ENCODE measurements at regions of chr11 and their contacts with region 1.

Region 1: GRCh38 chr11:1916986-1917670 is 2.4 kb upstream of the TNNT3 start:
- DNase-seq: no peak
- H3K4me3 ChIP-seq: no peak overlapping the region
- H3K27ac ChIP-seq: peak overlapping the region in 1 of 5 donors; percentile 38
- H3K4me1 ChIP-seq: peaks cover 0 to 16% (median 9%) of the 10 kb centered on the region in 4 donors
- H3K27me3 ChIP-seq: peaks cover 0 to 37% (median 10%) of the 10 kb centered on the region in 3 donors
- CTCF ChIP-seq: no peak
- EP300 ChIP-seq: no peak
- POLR2A ChIP-seq: no peak

Region 2: GRCh38 chr11:1893581-1894359 is 23.4 kb before region 1 on chr11:
- intact Hi-C with region 1: loop called (anchors 1 kb)
- DNase-seq: no peak
- H3K4me3 ChIP-seq: no peak overlapping the region
- H3K27ac ChIP-seq: no peak overlapping the region
- H3K4me1 ChIP-seq: peaks cover 0 to 24% (median 5%) of the 10 kb centered on the region in 4 donors
- H3K27me3 ChIP-seq: peaks cover 0 to 35% (median 0%) of the 10 kb centered on the region in 3 donors
- CTCF ChIP-seq: no peak
- EP300 ChIP-seq: no peak
- POLR2A ChIP-seq: no peak

Region 3: DNA sequence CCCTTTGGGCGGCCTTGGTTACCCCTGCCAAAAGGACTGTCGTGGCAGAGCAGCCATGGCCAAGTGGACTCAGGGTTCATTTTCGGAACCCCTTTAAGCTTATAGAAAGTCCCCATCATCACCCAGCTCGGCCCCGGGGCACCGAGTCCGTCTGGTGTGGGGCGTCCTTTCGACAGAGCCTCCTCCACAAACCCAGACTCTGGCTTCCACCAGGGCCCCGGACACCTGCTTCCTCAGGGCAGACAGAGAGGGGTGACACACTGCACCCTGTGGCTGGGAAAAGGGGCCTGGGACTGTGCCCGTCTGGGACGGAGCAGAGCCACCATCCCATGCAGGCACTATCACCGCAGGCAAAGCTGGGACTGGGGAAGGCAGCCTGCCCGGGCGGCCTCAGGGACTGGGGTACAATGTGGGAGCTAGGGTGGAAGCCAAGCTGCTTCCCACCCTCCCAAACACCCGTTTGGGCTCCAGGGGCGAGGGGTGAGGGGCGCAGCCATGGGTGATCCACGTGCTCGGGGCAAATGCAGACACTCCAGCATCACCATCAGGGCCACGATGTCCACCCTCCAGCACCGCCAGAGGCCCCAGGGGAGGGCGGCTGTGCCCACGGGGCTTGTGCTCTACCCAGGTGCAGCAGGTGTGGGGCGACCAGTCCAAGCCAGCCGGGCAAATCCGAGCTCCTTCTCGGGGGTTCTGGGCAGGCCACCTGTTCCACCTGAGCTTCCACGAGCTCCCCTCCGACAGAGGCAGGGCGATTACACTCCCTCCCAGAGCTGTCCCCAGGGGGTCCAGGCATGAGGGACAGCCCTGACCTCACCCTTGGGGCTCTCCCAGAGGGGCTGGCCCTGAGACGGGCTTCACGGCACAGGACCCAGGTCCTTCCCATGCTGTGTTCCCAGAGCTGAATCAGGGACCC is 18.3 kb after region 1 on chr11:
- intact Hi-C with region 1: loop called (anchors 2 kb)
- DNase-seq: no peak
- H3K4me3 ChIP-seq: no peak overlapping the region
- H3K27ac ChIP-seq: no peak overlapping the region
- H3K4me1 ChIP-seq: peaks cover 0 to 10% (median 9%) of the 10 kb centered on the region in 4 donors
- H3K27me3 ChIP-seq: peaks cover 0 to 29% (median 0%) of the 10 kb centered on the region in 3 donors
- CTCF ChIP-seq: no peak
- EP300 ChIP-seq: no peak
- POLR2A ChIP-seq: no peak